ENCODE measurements at regions of chr18 and their contacts with region 1.

Region 1: GRCh38 chr18:12500986-12501385 is 93.3 kb downstream of the PRELID3A start:
- DNase-seq: no peak
- ATAC-seq: no peak

Region 2: GRCh38 chr18:12442946-12443345 is 58.0 kb before region 1 on chr18:
- intact Hi-C with region 1: loop called in 1 of 2 experiments (anchors 10 kb)
- DNase-seq: no peak
- ATAC-seq: no peak

Region 3: DNA sequence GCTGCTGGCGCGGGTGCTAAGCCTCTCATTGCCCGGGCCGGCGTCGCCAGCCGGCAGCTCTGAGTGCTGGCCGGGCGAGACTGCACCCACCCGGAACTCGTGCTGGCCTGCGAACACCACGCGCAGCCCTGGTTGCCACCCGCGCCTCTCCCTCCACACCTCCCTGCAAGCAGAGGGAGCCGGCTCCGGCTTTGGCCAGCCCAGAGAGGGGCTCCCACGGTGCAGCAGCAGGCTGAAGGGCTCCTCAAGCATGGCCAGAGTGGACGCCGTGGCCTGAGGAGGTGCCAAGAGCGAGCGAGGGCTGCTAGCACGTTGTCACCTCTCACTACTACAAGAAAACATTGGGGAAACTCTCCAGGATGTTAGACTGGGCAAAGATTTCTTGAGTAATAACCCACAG is 58.3 kb after region 1 on chr18:
- intact Hi-C with region 1: no loop called
- DNase-seq: no peak
- ATAC-seq: no peak